ENCODE measurements at regions of chr9 and their contacts with region 1.

Region 1: GRCh38 chr9:134800791-134801339 is 79.7 kb upstream of the FCN2 start:
- DNase-seq: no peak
- H3K4me3 ChIP-seq: no peak overlapping the region
- CTCF ChIP-seq: no peak

Region 2: DNA sequence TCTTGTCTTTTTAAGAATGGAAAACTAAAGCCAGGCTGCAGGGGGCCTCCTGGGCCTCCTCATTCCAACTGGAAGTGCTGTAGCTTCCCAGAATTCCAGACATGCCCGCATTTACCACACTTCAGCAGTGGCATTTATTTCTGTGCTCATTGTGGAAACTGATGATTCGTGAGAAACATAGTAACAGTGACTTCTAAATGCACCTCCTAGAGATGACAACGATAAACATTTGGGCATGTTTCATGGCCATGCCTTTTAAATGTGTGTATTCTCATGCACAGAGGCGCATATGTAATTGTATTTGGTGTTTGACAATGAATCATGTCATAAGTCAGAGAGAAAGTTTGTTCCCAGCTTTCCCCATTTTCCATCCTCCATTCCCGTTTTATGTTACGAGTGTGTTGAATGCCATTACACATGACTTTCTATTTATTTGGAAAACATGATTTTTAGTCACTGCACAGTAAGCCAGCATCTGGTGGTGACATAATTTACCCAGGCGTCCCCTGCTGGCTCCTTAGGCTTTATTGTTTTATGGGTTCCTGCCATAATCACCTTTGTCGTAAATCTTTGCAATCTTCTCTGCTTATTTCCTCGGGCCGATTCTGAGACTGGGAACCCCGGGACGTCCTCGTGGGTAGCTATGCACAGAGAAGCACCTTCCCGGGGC is 10.9 kb after region 1 on chr9:
- CTCF ChIA-PET with region 1: interaction called, 22 read pairs
- POLR2A ChIA-PET with region 1: interaction called, 3 read pairs
- DNase-seq: peak; percentile 94
- H3K4me3 ChIP-seq: no peak overlapping the region; the same call in 1 of the 2 replicates
- CTCF ChIP-seq: no peak

Region 3: GRCh38 chr9:135037521-135038250 is 236.8 kb after region 1 on chr9:
- CTCF ChIA-PET with region 1: no interaction called
- POLR2A ChIA-PET with region 1: no interaction called
- DNase-seq: no peak
- H3K4me3 ChIP-seq: no peak overlapping the region
- CTCF ChIP-seq: no peak

Measured in AG04449 (cell line).